Lower leg skin (tissue), 4 donors: ENCODE measurements at regions of chr12 and their contacts with region 1.

Region 1: DNA sequence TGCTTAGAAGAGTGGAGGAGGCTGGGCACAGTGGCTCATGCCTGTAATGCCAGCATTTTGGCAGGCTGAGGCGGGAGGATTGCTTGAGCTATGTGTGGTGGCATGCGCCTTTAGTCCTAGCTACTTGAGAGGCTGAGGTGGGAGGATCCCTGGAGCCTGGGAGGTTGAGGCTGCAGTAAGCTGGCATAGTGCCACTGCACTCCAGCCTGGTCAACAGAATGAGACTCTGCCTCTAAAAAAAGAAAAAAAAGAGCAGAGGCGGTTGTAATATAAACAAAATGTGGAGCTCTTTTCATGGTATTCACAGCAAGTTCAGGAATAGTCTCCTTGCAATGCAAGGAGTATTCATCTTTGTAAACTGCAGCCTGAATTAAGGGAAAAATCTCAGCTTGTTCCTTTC is 27.2 kb downstream of the ARID2 start:
- DNase-seq: no peak
- H3K4me3 ChIP-seq: no peak overlapping the region
- CTCF ChIP-seq: no peak
- POLR2A ChIP-seq: no peak

Region 2: GRCh38 chr12:45435945-45436710 is 320.5 kb before region 1 on chr12:
- intact Hi-C with region 1: no loop called
- DNase-seq: no peak
- H3K4me3 ChIP-seq: no peak overlapping the region
- CTCF ChIP-seq: no peak
- POLR2A ChIP-seq: no peak

Region 3: GRCh38 chr12:45655201-45655600 is 101.5 kb before region 1 on chr12:
- intact Hi-C with region 1: no loop called
- DNase-seq: no peak
- H3K4me3 ChIP-seq: no peak overlapping the region
- CTCF ChIP-seq: no peak
- POLR2A ChIP-seq: no peak

Region 4: GRCh38 chr12:45737638-45738037 is 19.0 kb before region 1 on chr12:
- intact Hi-C with region 1: loop called (anchors 2 kb)
- DNase-seq: no peak
- H3K4me3 ChIP-seq: no peak overlapping the region
- CTCF ChIP-seq: no peak
- POLR2A ChIP-seq: no peak